ENCODE measurements at regions of chr10 and their contacts with region 1.

Region 1: DNA sequence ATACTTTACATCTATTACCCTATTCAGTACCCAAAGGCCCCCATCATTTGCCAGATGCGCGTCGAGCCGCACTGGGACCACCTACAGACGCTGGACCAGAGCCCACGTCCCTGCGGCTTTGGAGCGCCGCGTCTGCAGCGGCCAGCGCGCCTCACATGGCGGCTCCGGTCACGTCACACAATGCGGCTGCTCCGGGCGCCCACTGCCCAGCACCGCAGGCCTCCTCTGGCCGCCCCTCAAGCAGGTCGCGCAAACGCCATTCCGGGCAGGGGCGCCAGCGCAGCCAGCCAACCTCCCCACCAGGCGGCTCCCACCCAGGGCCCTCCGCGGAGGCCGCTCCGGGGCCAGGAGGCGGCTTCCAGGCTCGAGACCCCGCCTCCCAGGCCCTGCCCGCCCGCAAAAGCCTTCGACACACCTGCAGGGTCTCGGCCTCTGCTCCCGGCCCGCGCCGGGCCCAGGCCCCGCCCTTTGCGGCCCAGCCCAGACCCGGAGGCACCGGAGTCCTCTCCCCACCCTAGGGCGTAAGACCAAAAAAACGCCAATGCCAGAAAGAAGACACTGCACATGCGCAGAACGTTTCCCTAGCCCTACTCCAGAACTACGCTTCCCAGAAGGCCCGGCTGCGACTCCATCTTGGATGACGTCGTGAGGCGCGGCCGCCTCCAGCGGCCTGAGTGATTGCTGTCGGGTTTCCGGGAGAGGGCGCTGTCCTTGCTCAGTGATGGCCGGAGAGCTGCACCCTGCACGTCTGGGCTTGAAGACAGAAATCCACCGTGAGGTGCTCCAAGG is at the start of gene ZNF25:
- DNase-seq: peak; percentile 99
- H3K4me3 ChIP-seq: peak within 1 kb of the TSS; percentile 59 to 85
- H3K27ac ChIP-seq: peak within 1 kb of the TSS; percentile 95
- H3K4me1 ChIP-seq: no peaks in the 10 kb centered on the region
- H3K27me3 ChIP-seq: no peaks in the 10 kb centered on the region
- CTCF ChIP-seq: peak; percentile 88 to 94 (median 90)
- POLR2A ChIP-seq: peak; percentile 74 to 88
- total RNA-seq, gene ZNF25: 11.8 to 31.3 (median 27.3) TPM

Region 2: GRCh38 chr10:37857287-37858211 is 118.7 kb before region 1 on chr10 and contains the start of gene ZNF248:
- intact Hi-C with region 1: loop called (anchors 10 kb)
- DNase-seq: peak; percentile 96 to 97
- H3K4me3 ChIP-seq: peak within 1 kb of the TSS; percentile 64 to 97
- H3K27ac ChIP-seq: peak within 1 kb of the TSS; percentile 100
- H3K4me1 ChIP-seq: peaks cover 4% of the 10 kb centered on the region in 2 donors
- H3K27me3 ChIP-seq: no peaks in the 10 kb centered on the region
- CTCF ChIP-seq: peak in 1 of 4 experiments; percentile 14
- POLR2A ChIP-seq: peak; percentile 94 to 100
- total RNA-seq, gene ZNF248: 7.2 to 51.2 (median 26.9) TPM

Region 3: DNA sequence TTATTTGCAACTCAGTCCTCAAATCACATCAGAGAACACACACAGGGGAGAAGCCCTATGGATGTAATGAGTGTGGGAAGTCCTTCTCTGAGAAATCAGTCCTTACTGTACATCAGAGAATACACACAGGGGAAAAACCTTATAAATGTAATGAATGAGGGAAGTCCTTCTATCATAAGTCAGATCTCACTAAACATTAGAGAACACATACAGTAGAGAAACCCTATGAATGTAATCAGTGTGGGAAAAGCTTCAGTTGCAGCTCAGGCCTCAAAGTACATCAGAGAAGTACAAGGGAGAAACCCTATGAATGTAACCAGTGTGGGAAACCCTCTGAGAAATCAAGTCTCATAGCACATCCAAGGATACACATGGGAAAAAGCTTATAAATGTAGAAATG is 79.8 kb before region 1 on chr10:
- intact Hi-C with region 1: no loop called
- DNase-seq: no peak
- H3K4me3 ChIP-seq: no peak overlapping the region
- H3K27ac ChIP-seq: no peak overlapping the region
- H3K4me1 ChIP-seq: no peaks in the 10 kb centered on the region
- H3K27me3 ChIP-seq: no peaks in the 10 kb centered on the region
- CTCF ChIP-seq: no peak
- POLR2A ChIP-seq: no peak